ENCODE measurements at regions of chr13 and their contacts with region 1.

Region 1: DNA sequence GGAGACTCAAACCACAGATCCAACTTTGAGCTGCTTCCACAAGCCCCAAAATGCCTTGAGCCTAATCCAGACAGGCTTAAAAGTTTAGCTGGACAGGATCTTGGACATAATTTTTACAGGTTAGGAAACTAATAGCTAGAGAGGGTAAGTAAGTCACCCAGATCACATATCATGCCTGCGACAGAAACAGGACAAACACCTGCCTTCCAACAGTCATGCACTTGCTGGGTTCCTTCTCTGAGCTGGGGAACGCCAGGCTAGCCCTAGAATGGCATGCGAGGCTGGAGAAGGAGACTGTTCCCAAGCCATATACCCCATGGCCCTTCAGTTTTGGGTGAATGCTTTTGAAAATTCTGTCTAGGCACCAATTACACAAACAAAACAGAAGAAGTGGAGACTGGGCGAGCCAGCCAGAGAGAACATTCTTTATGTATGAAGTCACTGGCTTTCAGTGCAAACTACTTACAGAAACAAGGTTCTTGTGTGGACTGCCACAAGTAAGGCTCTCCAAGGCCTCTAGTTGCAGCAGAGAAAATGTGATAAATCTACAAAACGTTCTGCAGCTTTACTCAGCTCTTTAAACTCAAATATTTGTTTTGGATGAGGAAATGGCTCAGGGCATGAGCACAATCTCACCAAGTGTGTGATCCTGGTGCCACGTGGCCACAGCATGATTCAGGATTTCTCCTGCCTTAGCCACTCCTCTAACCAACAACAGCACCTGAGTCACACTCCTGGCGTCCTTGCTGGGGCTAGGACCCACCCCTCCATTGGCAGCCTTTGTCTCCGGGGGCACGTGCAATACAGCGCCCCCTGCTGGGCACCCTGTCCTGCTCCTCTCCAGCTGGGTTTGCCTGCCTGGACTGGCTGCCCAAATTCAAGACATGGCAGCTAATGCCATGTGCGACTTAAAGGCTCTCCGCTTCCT is 73.4 kb upstream of the UBL3 start:
- DNase-seq: peak; percentile 50
- ATAC-seq: peak; percentile 44
- H3K4me3 Mint-ChIP-seq: no peak overlapping the region
- H3K27ac Mint-ChIP-seq: no peak overlapping the region
- H3K4me1 Mint-ChIP-seq: peaks cover 22% of the 10 kb centered on the region
- H3K27me3 Mint-ChIP-seq: peaks cover 2% of the 10 kb centered on the region

Region 2: GRCh38 chr13:29771247-29771646 is 152.6 kb before region 1 on chr13:
- CTCF ChIA-PET with region 1: interaction called, 15 read pairs
- POLR2A ChIA-PET with region 1: no interaction called
- DNase-seq: no peak
- ATAC-seq: no peak
- H3K4me3 Mint-ChIP-seq: no peak overlapping the region
- H3K27ac Mint-ChIP-seq: no peak overlapping the region
- H3K4me1 Mint-ChIP-seq: no peaks in the 10 kb centered on the region
- H3K27me3 Mint-ChIP-seq: no peaks in the 10 kb centered on the region

Region 3: DNA sequence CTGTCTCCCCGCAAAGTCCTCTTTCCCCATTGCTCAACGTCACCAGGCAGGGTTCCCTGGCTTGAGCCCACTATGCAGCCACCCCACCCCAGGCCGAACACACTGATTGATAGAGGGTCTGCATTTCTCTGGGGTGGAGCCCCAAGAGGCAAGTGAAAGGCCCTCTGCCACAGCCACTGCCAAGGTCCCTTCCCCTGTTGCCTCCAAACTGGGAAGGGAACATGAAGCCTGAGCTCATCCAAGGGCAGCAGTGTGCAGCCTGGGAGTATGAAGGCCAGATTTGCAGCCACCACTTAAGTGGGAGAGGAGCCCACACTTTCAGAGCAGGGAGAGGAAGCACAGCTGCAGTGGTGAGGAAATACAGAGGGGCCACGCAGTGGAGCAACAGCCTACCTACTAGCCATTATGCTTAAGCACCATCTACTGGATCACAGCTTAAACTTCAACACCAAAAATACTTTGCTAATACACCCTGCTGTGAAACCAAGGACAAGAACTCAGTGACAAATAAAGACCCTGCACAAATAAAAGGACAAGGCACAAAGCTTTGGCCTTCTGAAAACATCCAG is 122.0 kb before region 1 on chr13:
- CTCF ChIA-PET with region 1: no interaction called
- POLR2A ChIA-PET with region 1: no interaction called
- DNase-seq: no peak
- ATAC-seq: no peak
- H3K4me3 Mint-ChIP-seq: no peak overlapping the region
- H3K27ac Mint-ChIP-seq: no peak overlapping the region
- H3K4me1 Mint-ChIP-seq: peaks cover 4% of the 10 kb centered on the region
- H3K27me3 Mint-ChIP-seq: no peaks in the 10 kb centered on the region

Region 4: DNA sequence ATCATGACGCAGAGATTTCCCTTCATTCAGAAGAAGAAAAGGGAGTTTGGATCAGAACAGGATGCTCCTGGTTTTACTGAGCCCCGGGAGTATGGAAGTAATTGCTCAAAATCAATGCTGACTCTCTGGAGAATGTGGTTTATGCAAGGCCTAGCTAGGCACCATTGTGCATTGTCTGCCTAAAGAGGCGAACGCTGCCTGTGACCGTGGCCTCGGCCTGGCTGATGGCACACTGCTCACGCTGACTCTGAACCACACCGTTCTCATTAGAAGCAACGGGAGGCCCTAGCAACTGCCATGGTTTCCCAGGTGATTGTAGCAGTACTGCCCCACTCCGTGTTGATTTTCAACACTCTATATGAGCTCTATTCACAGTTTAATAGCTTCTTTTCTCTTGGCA is 31.7 kb before region 1 on chr13:
- CTCF ChIA-PET with region 1: interaction called, 11 read pairs
- POLR2A ChIA-PET with region 1: no interaction called
- DNase-seq: no peak
- ATAC-seq: no peak
- H3K4me3 Mint-ChIP-seq: no peak overlapping the region
- H3K27ac Mint-ChIP-seq: no peak overlapping the region
- H3K4me1 Mint-ChIP-seq: peaks cover 11% of the 10 kb centered on the region
- H3K27me3 Mint-ChIP-seq: no peaks in the 10 kb centered on the region

Region 5: DNA sequence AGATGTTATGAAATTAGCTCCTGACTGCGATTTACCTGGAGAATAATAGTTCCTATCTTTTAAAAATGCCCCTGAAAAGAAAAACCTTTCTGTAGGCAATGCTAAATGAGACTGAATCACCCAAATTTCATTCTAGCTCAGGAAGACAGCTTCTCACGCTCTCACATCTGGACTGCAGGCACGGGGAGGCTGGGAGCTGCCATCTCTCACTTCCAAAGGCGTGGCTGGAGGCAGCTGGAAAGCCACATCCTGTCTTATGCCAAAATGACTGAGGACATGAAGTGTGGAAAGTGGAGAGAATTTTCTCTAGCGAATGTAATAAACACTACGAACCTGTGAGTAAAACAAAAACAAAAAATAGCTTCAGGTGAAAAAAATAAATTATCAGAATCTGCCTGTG is 15.4 kb before region 1 on chr13:
- CTCF ChIA-PET with region 1: interaction called, 18 read pairs
- POLR2A ChIA-PET with region 1: no interaction called
- DNase-seq: no peak
- ATAC-seq: no peak
- H3K4me3 Mint-ChIP-seq: no peak overlapping the region
- H3K27ac Mint-ChIP-seq: no peak overlapping the region
- H3K4me1 Mint-ChIP-seq: peaks cover 15% of the 10 kb centered on the region
- H3K27me3 Mint-ChIP-seq: peaks cover 3% of the 10 kb centered on the region

Region 6: GRCh38 chr13:29940715-29941114 is 16.9 kb after region 1 on chr13:
- CTCF ChIA-PET with region 1: interaction called, 65 read pairs
- POLR2A ChIA-PET with region 1: interaction called, 4 read pairs
- DNase-seq: no peak
- ATAC-seq: no peak
- H3K4me3 Mint-ChIP-seq: no peak overlapping the region
- H3K27ac Mint-ChIP-seq: no peak overlapping the region
- H3K4me1 Mint-ChIP-seq: peaks cover 28% of the 10 kb centered on the region
- H3K27me3 Mint-ChIP-seq: peaks cover 2% of the 10 kb centered on the region

Region 7: GRCh38 chr13:29980339-29980738 is 56.5 kb after region 1 on chr13:
- CTCF ChIA-PET with region 1: no interaction called
- POLR2A ChIA-PET with region 1: no interaction called
- DNase-seq: no peak
- ATAC-seq: no peak
- H3K4me3 Mint-ChIP-seq: no peak overlapping the region
- H3K27ac Mint-ChIP-seq: no peak overlapping the region
- H3K4me1 Mint-ChIP-seq: peaks cover 10% of the 10 kb centered on the region
- H3K27me3 Mint-ChIP-seq: peaks cover 20% of the 10 kb centered on the region

Region 8: DNA sequence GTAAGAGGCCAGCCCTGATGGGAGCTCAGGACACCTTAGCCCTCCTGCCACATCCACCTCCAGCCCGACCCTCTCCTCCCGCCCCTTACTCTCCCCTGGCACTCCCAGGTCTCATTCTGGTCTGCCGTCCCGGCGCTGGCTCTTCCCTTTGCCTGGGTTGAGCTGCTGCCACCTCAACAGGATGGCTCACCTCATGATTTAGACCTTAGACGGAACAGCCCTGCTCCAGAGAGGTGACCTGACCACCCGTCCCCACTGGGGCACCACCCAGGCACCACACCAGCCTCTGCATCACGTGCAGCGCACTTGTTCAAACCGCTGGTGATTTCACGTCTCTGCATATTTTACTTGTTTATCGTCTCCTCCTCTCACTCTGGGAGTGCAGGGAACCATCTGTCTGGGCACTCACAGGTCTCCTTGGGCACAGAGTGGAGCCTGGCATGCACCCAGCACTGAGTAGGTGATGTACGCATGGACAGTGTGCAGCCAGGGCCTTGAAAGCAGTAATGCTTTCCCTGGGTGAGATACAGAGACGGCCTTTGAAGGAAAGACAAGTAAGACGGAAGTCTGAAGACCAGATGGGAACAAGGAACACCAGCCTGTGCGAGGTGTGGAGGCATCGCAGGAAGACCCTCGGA is 200.4 kb after region 1 on chr13:
- CTCF ChIA-PET with region 1: no interaction called
- POLR2A ChIA-PET with region 1: no interaction called
- DNase-seq: no peak
- ATAC-seq: no peak
- H3K4me3 Mint-ChIP-seq: no peak overlapping the region
- H3K27ac Mint-ChIP-seq: no peak overlapping the region
- H3K4me1 Mint-ChIP-seq: peaks cover 34% of the 10 kb centered on the region
- H3K27me3 Mint-ChIP-seq: no peaks in the 10 kb centered on the region